Posterior vena cava (tissue), 2 donors: ENCODE measurements at regions of chr10 and their contacts with region 1.

Region 1: DNA sequence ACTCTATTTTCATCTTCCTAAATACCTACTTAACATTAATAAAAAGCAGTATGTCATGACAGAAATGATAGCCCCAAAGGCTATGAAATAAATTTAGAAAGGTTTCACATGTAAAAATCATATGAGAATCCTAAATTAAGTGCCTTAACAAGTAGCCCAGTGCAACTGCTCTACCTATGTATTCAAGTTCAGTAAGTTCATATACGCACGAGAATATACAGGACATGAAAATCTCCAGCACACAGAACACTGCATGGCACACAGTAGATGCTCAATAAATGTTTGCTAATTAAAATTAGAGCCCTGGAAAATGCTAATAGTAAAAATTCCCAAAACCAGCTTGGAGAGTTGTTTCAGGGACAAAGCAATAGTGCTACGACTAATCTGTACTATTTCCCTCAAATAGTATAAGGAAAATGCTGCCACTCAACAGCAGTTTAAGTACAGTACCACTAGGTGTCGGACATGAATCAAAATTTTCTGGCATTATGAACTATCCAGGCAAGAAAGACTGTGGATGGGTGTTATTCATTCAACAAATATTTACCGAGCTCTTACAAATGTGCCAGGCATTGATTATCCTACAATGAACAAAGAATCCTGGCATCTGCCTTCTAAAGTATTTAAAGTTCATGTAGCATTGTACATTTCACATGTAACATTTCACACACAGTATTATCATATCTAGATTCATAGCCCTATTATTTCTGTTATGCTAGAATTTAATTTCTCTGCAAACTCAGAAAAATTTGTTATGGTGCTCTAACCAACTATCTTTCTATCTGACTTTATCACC is 80.9 kb downstream of the ARHGAP21 start:
- DNase-seq: no peak

Region 2: DNA sequence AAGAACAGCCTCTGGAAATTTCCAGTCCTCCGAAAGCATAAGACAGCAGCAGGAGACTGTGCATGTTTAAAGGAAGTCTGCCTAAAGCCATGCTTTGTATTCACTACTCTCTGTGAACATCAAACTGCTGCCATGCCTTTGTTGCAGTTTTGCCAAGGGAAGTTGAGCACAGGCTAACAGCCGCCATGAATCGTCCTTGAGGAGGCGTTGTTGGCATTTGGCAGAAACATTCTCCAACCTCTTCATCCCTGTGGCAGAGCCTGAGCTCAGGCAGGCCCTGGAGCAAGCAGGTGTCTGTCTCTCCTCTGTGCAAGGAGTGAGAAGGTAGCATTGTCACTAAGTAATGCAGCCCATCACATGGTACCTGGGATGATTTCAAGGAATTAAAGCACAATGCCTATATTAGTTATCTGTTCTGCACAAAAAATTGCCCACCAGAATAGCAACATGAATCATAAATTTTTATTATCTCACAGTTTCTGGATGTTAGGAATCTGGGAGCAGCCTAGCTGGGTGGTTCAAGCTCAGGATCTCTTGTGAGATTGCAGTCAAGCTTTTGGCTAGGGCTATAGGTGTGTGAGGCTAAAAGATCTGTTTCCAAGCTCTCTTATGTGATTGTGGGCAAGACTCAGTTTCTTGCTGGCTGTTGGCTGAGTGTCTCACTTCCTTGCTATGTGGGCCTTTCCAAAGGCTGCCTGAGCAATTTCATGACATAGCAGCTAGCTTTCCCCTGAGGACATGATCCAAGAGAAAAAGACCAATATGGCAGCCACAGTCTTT is 480.4 kb before region 1 on chr10:
- intact Hi-C with region 1: no loop called
- DNase-seq: no peak

Region 3: GRCh38 chr10:24989867-24990266 is 347.0 kb after region 1 on chr10:
- intact Hi-C with region 1: loop called in 1 of 2 experiments (anchors 10 kb)
- DNase-seq: no peak